ENCODE measurements at regions of chr2 and their contacts with region 1.

Region 1: DNA sequence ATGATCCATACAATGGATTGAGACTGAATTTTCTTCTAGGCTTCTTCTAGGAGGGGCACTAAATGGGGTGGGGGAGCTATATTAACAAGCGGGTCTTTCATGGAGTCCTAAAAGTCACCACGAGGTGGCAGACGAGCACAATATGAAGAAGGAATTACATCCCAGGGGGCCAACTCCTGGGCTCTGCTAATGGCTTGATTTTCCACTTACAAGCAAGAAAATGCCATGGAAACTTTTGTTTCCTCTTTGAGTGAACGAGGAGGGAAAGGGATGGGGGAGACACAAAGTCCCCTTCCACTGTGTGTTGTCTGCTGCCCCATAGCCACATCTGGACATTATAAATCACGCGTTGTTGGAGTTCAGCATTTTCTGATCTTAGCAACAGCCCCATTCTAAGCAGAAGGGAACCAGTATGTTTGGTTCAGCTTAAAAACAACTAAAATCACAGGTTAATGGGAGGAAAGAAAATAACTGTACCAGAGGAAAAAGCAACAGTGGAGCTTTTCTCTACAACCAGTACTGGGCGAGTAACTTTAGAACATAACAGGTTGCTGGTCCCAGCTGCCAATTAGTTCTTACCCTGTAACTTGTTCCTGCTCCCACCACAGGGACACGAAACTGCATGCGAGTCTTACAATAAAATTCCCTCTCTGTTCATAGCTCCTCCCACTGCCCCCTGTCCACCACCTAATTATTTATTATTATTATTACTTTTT is 285.0 kb upstream of the PARD3B start:
- DNase-seq: peak; percentile 68
- H3K4me3 Mint-ChIP-seq: no peak overlapping the region
- H3K27ac Mint-ChIP-seq: no peak overlapping the region
- H3K4me1 Mint-ChIP-seq: no peaks in the 10 kb centered on the region
- H3K27me3 Mint-ChIP-seq: peaks cover 16% of the 10 kb centered on the region

Region 2: DNA sequence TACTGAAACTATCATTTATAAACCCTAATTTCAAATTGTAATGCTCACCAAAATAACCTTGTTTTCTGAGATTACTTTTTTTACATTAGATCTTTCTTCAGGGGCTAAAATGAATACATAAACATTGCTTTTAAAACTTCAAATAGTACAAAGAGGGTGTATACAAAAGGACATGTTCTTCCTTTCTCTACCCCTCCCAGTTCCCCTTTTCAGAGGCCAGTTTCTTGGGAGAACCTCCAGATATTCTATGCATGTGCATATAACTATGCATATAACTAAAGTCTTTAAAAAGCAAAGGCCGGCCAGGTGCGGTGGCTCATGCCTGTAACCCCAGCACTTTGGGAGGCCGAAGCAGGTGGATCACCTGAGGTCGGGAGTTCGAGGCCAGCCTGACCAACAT is 1636.2 kb before region 1 on chr2:
- CTCF ChIA-PET with region 1: no interaction called
- intact Hi-C with region 1: no loop called
- DNase-seq: no peak
- H3K4me3 Mint-ChIP-seq: no peak overlapping the region
- H3K27ac Mint-ChIP-seq: no peak overlapping the region
- H3K4me1 Mint-ChIP-seq: no peaks in the 10 kb centered on the region
- H3K27me3 Mint-ChIP-seq: no peaks in the 10 kb centered on the region

Region 3: DNA sequence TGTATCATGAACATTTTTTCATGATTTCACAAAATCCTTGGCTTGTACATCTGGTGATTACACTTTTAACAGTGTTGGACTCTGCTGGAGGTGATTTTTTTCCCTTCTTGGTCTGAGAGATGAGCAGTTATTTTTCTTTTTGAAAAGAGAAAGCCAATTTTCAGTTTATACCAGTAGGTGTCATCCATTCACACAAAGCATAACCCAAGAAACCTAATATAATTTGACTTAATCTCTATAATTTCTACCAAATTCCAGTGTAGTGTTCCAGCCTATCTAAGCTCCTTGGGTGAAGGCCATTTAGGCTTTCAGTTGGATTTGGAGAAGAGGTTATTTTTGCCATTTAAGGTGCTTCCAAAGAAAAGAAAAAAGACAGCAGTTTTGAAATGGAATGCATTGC is 331.5 kb before region 1 on chr2:
- CTCF ChIA-PET with region 1: no interaction called
- intact Hi-C with region 1: loop called (anchors 1 kb)
- DNase-seq: no peak
- H3K4me3 Mint-ChIP-seq: no peak overlapping the region
- H3K27ac Mint-ChIP-seq: no peak overlapping the region
- H3K4me1 Mint-ChIP-seq: peaks cover 43% of the 10 kb centered on the region
- H3K27me3 Mint-ChIP-seq: no peaks in the 10 kb centered on the region

Region 4: GRCh38 chr2:204145263-204145751 is 115.0 kb before region 1 on chr2:
- CTCF ChIA-PET with region 1: interaction called, 30 read pairs
- intact Hi-C with region 1: loop called (anchors 1 kb)
- DNase-seq: peak; percentile 90
- H3K4me3 Mint-ChIP-seq: peak overlapping the region; percentile 65
- H3K27ac Mint-ChIP-seq: peak overlapping the region; percentile 22
- H3K4me1 Mint-ChIP-seq: peaks cover 9% of the 10 kb centered on the region
- H3K27me3 Mint-ChIP-seq: peaks cover 5% of the 10 kb centered on the region

Region 5: DNA sequence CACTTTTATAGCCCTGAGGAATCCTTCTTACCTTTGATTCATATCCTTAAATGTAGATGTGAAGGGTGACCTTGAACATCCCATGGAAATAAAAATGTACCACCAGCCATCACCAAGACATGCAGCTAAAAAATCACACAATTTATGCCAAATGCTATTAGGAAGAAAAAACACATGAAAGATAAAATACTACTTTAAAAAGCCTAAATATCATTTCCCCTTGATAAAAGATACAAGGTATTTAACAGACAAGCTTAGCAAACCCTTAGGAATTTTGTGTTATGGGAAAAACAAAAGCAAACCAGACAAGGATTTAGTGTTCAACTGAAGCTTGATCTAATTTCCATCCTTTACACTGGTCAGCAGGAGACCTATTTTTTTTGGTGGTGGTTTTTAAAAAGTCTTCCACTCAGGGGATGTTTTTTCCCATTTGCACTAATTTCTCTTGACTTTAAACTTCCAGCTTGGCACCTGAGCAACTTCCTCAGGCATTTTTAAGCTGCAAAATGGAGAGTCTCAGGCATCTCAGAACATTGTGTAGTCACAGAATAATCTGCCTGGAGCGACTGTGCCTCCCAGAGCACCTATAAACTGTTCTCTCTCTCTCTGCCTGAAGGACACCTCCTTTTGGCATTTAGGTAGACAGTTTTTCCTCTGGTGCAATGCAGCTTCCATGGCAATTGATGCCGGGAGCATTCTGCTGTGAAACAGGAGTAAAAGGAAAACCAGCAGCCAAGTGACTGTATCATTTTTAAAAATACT is 68.6 kb before region 1 on chr2:
- CTCF ChIA-PET with region 1: no interaction called
- intact Hi-C with region 1: no loop called
- DNase-seq: no peak
- H3K4me3 Mint-ChIP-seq: no peak overlapping the region
- H3K27ac Mint-ChIP-seq: no peak overlapping the region
- H3K4me1 Mint-ChIP-seq: peaks cover 13% of the 10 kb centered on the region
- H3K27me3 Mint-ChIP-seq: peaks cover 3% of the 10 kb centered on the region

Region 6: DNA sequence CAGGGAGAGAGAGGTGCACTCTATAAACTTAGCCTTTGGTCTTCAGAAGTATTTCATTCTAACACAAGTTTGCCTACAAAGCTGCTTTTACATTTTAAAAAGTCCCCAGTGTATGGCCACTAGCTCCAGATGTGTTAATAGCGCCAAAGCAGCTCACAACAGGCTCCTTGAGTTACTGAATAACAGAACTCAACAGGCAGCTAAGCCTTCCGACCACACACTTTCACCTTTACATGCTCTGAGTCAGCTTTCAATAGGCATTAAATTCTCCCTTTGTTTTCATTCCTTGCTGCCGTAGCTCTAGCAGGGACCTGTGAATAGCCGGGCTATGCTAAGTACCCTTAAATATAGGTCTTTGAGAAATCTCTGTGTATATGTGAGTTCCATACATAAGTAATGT is 22.2 kb after region 1 on chr2:
- CTCF ChIA-PET with region 1: interaction called, 13 read pairs
- intact Hi-C with region 1: no loop called
- DNase-seq: no peak
- H3K4me3 Mint-ChIP-seq: no peak overlapping the region
- H3K27ac Mint-ChIP-seq: no peak overlapping the region
- H3K4me1 Mint-ChIP-seq: no peaks in the 10 kb centered on the region
- H3K27me3 Mint-ChIP-seq: peaks cover 2% of the 10 kb centered on the region

Region 7: DNA sequence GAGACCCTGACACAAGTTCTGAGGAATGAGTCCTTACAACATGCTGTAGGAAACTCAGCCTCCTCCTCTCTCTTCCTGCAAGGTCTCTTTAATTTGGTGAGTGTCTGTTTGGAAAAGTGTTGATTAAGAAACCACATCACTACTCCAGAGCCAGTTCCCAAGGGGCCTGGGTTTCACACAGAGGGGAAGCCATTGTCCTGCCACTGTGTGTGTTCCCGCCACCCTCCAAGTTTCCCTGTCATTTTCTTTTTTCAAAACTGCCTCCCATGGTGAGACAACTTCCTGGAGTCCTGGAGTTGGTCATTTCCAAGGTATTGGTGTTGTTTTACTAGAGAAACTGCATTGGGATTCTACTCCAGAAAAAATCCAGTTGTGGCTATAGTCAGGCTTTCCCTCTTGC is 52.9 kb after region 1 on chr2:
- CTCF ChIA-PET with region 1: interaction called, 10 read pairs
- intact Hi-C with region 1: no loop called
- DNase-seq: no peak
- H3K4me3 Mint-ChIP-seq: no peak overlapping the region
- H3K27ac Mint-ChIP-seq: no peak overlapping the region
- H3K4me1 Mint-ChIP-seq: no peaks in the 10 kb centered on the region
- H3K27me3 Mint-ChIP-seq: peaks cover 2% of the 10 kb centered on the region

Region 8: DNA sequence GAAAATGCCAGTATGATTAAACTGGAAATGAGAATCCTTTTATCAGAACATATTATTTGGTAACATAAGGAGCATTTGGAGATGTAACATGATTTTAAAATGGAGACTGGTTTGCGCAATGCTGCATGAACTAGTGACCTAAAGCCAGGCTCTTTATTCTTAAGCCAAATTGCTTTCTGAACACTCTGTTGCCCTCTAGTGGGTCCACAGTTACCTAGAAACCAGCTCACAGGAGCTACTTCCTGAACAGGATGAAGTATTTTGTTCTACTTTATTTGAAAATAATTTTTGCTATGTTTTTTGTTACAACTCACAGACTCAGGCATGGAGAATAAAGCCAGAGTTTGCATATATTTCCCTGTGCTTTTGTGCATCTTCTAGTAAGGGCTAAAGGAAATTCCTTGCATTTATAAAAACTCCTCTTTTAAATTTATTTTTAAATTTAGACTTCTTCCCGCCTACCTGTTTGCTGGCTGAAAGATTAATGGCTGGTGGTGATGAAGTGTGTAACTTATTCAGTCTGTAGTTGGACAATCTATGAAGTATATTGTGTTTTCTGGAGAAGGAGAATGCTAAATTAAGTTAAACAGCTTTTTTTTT is 431.7 kb after region 1 on chr2:
- CTCF ChIA-PET with region 1: interaction called, 5 read pairs
- intact Hi-C with region 1: loop called (anchors 2 kb)
- DNase-seq: peak; percentile 63
- H3K4me3 Mint-ChIP-seq: no peak overlapping the region
- H3K27ac Mint-ChIP-seq: no peak overlapping the region
- H3K4me1 Mint-ChIP-seq: peaks cover 7% of the 10 kb centered on the region
- H3K27me3 Mint-ChIP-seq: no peaks in the 10 kb centered on the region

Region 9: GRCh38 chr2:204881655-204882054 is 621.3 kb after region 1 on chr2:
- CTCF ChIA-PET with region 1: no interaction called
- intact Hi-C with region 1: loop called (anchors 5 kb)
- DNase-seq: peak; percentile 19
- H3K4me3 Mint-ChIP-seq: no peak overlapping the region
- H3K27ac Mint-ChIP-seq: no peak overlapping the region
- H3K4me1 Mint-ChIP-seq: peaks cover 32% of the 10 kb centered on the region
- H3K27me3 Mint-ChIP-seq: no peaks in the 10 kb centered on the region

Measured in activated naive CD4-positive, alpha-beta T cell treated with anti-CD3 and anti-CD28 coated beads for 36 hours (primary cell).